ENCODE measurements at regions of chr5 and their contacts with region 1.

Region 1: DNA sequence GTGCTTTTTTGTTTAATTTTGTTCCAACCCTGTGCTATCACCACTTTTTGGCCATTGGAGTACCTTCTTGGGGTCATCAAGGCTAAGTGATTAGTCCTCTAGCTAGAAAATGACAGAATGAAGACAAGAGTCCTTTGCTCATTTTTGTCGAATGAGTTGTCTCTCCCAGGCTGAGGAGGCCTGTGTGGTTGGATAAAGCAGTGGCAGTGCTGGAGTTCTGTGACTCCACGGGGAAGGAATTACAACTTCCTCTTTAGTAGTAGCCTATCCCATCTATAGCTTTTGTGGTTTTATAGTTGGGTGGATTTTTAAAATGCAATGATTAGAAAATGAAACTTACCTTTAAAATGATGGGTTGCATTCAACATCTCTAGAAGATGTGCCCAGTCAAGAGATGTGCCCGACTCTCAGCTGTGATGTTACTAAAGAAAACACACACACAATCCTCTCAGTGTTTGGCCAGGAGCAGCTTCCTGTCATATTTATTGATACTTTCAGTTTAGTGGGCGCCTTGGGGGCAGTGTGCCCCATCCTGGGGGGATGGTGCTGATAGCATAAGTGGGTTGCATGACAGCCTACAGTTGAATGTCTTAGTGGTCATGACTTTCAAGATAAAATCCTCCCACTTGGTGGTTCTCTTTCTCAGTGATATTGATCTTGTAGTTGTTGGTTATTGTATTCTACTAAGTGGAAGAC is 11.9 kb downstream of the OTULINL start:
- DNase-seq: peak; percentile 63
- H3K4me3 Mint-ChIP-seq: peak overlapping the region; percentile 19
- H3K27ac Mint-ChIP-seq: peak overlapping the region; percentile 99
- H3K4me1 Mint-ChIP-seq: peaks cover 90% of the 10 kb centered on the region
- H3K27me3 Mint-ChIP-seq: no peaks in the 10 kb centered on the region

Region 2: GRCh38 chr5:14581333-14581890 is 12.1 kb before region 1 on chr5 and contains the start of gene OTULINL:
- CTCF ChIA-PET with region 1: interaction called, 15 read pairs
- DNase-seq: peak; percentile 91
- H3K4me3 Mint-ChIP-seq: peak within 1 kb of the TSS; percentile 84
- H3K27ac Mint-ChIP-seq: peak within 1 kb of the TSS; percentile 88
- H3K4me1 Mint-ChIP-seq: peaks cover 39% of the 10 kb centered on the region
- H3K27me3 Mint-ChIP-seq: peaks cover 25% of the 10 kb centered on the region